ENCODE measurements at regions of chr18 and their contacts with region 1.

Region 1: GRCh38 chr18:42068030-42068429 is 113.0 kb downstream of the PIK3C3 start:
- DNase-seq: no peak
- H3K4me3 ChIP-seq: no peak overlapping the region
- H3K4me3 Mint-ChIP-seq: no peak overlapping the region
- H3K27ac ChIP-seq: no peak overlapping the region
- H3K27ac Mint-ChIP-seq: no peak overlapping the region
- H3K4me1 ChIP-seq: no peaks in the 10 kb centered on the region
- H3K4me1 Mint-ChIP-seq: peaks cover 0 to 4% (median 0%) of the 10 kb centered on the region in 3 donors
- H3K27me3 ChIP-seq: no peaks in the 10 kb centered on the region
- H3K27me3 Mint-ChIP-seq: no peaks in the 10 kb centered on the region

Region 2: GRCh38 chr18:42038936-42039335 is 29.1 kb before region 1 on chr18:
- CTCF ChIA-PET with region 1: no interaction called
- POLR2A ChIA-PET with region 1: no interaction called
- DNase-seq: no peak
- H3K4me3 ChIP-seq: no peak overlapping the region
- H3K4me3 Mint-ChIP-seq: no peak overlapping the region
- H3K27ac ChIP-seq: no peak overlapping the region
- H3K27ac Mint-ChIP-seq: peak overlapping the region in 2 of 8 donors; percentile 25 to 43
- H3K4me1 ChIP-seq: no peaks in the 10 kb centered on the region
- H3K4me1 Mint-ChIP-seq: peaks cover 3 to 10% (median 4%) of the 10 kb centered on the region in 3 donors
- H3K27me3 ChIP-seq: no peaks in the 10 kb centered on the region
- H3K27me3 Mint-ChIP-seq: peaks cover 0 to 2% of the 10 kb centered on the region in 2 donors

Region 3: GRCh38 chr18:42053188-42053781 is 14.7 kb before region 1 on chr18:
- CTCF ChIA-PET with region 1: interaction called, 14 read pairs
- POLR2A ChIA-PET with region 1: no interaction called
- DNase-seq: peak; percentile 28 to 55 (median 41)
- H3K4me3 ChIP-seq: no peak overlapping the region
- H3K4me3 Mint-ChIP-seq: no peak overlapping the region
- H3K27ac ChIP-seq: no peak overlapping the region
- H3K27ac Mint-ChIP-seq: peak overlapping the region in 6 of 8 donors; percentile 4 to 68 (median 30)
- H3K4me1 ChIP-seq: no peaks in the 10 kb centered on the region
- H3K4me1 Mint-ChIP-seq: peaks cover 12 to 15% (median 15%) of the 10 kb centered on the region in 3 donors
- H3K27me3 ChIP-seq: no peaks in the 10 kb centered on the region
- H3K27me3 Mint-ChIP-seq: no peaks in the 10 kb centered on the region